ENCODE measurements at regions of chr19 and their contacts with region 1.

Region 1: DNA sequence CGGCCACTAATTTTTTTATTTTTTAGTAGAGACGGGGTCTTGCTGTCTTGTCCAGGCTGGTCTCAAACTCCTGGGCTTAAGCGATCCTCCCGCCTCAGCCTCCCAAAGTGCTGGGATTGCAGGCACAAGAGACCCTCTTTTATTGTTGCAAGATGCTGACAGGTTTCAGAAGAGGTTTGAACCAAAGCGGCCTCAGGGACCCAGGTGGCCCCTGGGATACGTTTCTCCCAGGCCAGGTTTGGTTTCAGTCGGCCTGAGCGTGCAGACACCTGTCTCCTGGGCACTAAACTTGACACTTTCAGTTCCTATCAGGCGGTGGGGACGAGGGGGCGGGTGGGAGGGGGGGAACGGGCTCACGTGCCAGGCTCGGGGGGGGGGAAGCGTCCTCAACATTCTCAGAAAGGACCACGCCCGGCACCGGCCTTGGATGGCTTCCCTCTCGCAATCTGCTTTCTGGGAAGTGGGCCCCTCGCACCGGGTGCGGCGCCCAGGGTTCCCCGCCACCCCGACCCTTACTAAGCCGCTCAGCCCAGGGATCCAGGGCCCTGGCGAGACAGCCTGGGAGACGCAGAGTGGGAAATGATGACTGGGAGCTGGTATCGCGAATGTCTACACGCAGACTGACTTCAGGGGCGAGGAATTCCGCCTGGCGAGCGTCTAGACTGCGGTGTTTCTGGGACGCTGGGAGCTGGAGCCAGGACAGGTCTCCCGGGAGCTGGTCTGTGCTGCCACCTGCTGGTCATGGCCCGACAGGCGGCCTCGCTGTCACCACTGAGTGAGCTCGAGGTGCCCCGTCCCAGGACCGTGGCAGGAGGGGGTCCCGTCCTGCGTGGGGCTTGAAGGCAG is 91.6 kb downstream of the GNG7 start:
- DNase-seq: peak; percentile 60
- H3K4me3 ChIP-seq: peak overlapping the region; percentile 30
- H3K27me3 ChIP-seq: no peaks in the 10 kb centered on the region
- CTCF ChIP-seq: peak; percentile 98

Region 2: GRCh38 chr19:2426611-2427428 is 184.0 kb before region 1 on chr19:
- CTCF ChIA-PET with region 1: interaction called, 13 read pairs
- POLR2A ChIA-PET with region 1: interaction called, 3 read pairs
- DNase-seq: no peak
- H3K4me3 ChIP-seq: peak overlapping the region; percentile 89
- H3K27me3 ChIP-seq: no peaks in the 10 kb centered on the region
- CTCF ChIP-seq: no peak

Region 3: DNA sequence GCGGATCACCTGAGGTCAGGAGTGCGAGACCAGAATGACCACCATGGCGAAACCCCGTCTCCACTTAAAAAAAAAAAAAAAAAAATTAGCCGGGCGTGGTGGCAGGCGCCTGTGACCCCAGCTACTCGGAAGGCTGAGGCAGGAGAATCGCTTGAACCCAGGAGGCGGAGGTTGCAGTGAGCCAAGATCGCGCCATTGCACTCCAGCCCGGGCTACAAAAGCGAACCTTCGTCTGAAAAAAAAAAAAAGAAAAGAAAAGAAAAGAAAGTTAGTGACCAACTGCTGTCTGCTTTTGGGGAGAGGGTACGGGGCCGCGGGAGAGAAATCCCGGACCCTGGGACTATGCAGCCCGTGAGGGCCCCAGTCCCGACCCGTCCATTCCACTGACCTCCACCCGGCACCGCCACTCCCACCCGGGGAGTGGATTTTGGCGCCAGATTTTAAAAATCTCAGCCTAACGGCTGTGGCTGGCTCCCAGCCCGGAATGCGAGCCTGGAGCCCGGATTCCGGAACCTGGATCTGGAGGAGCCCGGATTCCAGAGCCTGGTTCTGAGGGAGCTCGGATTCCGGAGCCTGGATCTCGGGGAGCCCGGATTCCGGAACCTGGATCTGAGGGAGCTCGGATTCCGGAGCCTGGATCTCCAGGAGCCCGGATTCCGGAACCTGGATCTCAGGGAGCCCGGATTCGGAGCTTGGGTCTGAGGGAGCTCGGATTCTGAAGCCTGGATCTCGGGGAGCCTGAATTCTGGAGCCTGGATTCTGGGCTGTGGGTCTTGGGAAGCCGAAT is 148.0 kb before region 1 on chr19:
- CTCF ChIA-PET with region 1: interaction called, 18 read pairs
- POLR2A ChIA-PET with region 1: no interaction called
- DNase-seq: peak; percentile 57
- H3K4me3 ChIP-seq: peak overlapping the region; percentile 48
- H3K27me3 ChIP-seq: no peaks in the 10 kb centered on the region
- CTCF ChIP-seq: no peak

Region 4: GRCh38 chr19:2469102-2469914 is 141.6 kb before region 1 on chr19:
- CTCF ChIA-PET with region 1: interaction called, 37 read pairs
- POLR2A ChIA-PET with region 1: no interaction called
- DNase-seq: no peak
- H3K4me3 ChIP-seq: no peak overlapping the region
- H3K27me3 ChIP-seq: no peaks in the 10 kb centered on the region
- CTCF ChIP-seq: no peak

Region 5: GRCh38 chr19:2475702-2476450 is 135.0 kb before region 1 on chr19 and contains the start of gene GADD45B:
- CTCF ChIA-PET with region 1: interaction called, 38 read pairs
- POLR2A ChIA-PET with region 1: interaction called, 25 read pairs
- DNase-seq: peak; percentile 85
- H3K4me3 ChIP-seq: peak within 1 kb of the TSS; percentile 70
- H3K27me3 ChIP-seq: no peaks in the 10 kb centered on the region
- CTCF ChIP-seq: no peak
- polyA plus RNA-seq, gene GADD45B: 54.5 and 69.8 TPM in 2 replicates

Region 6: DNA sequence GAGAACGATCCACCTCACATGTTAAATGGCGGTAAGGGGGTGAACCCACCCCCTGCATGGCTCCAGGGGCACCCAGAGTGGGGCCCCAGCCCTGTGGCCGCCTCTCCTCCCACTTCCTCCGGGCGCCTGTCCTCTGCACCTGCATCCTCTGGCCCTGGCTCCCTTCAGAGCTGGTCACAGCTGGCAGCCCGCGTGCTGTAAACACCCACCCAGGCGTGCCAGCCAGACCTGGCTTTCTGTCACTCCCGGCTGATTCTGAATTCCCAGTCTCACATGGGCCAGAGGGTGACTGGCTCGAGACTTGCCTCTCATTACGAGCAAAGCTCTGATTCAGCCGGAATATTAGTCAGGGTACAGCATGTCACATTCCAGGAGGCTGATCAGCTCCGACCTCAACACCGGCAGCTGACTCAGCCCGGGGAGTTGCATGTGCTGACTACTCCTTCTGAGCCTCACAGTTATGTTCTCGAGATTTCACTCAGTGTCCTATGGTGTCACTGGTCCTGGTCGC is 16.5 kb after region 1 on chr19:
- CTCF ChIA-PET with region 1: interaction called, 54 read pairs
- POLR2A ChIA-PET with region 1: interaction called, 3 read pairs
- DNase-seq: peak; percentile 91
- H3K4me3 ChIP-seq: no peak overlapping the region
- H3K27me3 ChIP-seq: no peaks in the 10 kb centered on the region
- CTCF ChIP-seq: no peak

Region 7: DNA sequence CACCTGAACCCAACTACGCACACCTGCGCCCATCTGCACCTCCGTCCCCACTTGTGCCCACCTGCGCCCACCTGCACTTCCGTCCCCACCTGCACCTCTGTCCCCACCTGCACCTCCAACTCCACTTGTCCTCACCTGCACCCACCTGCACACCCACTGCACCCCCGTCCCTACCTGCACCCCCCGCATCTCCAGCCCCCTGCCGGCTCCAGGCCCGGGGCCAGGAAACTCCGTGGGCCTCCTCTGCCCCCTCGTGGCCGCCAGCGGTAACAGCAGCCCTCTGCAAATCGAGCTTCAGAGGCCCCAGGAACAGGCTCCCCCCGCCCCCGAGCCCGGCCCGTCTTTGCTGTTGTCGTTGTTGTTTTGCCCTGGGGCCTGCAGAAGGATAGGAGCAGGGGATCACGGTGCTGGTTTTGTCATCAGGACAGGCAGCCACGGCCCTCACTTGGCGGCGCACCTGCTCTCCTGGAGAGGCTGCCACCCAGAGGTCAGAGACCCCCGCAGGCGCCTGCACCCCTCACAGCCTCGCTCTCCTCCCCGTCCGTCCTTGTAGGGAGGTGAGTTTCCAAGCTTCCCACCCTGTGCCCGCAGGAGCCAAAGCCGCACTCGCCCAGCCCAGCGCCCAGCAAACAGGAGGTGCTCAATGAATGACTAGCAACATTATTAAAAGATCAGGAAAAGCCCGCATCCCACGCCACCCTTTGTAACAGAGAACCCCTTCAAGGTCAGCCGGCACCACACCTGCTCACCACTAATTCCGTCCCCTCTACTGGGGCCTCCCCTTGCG is 26.2 kb after region 1 on chr19:
- CTCF ChIA-PET with region 1: interaction called, 52 read pairs
- POLR2A ChIA-PET with region 1: interaction called, 4 read pairs
- DNase-seq: no peak
- H3K4me3 ChIP-seq: no peak overlapping the region
- H3K27me3 ChIP-seq: peaks cover 2% of the 10 kb centered on the region; the same call in 1 of the 2 replicates
- CTCF ChIP-seq: peak; percentile 96